ENCODE measurements at regions of chr9 and their contacts with region 1.

Region 1: GRCh38 chr9:89497978-89498851 is at the start of gene SEMA4D:
- DNase-seq: peak in 3 of 5 donors; percentile 28 to 68 (median 37)
- H3K4me3 ChIP-seq: peak within 1 kb of the TSS; percentile 89 to 98
- H3K4me3 Mint-ChIP-seq: peak within 1 kb of the TSS; percentile 94 to 100 (median 98)
- H3K27ac ChIP-seq: peak within 1 kb of the TSS; percentile 72
- H3K27ac Mint-ChIP-seq: peak within 1 kb of the TSS; percentile 94 to 98 (median 96)
- H3K4me1 ChIP-seq: peaks cover 86% of the 10 kb centered on the region
- H3K4me1 Mint-ChIP-seq: peaks cover 71 to 93% (median 81%) of the 10 kb centered on the region in 4 donors
- H3K27me3 ChIP-seq: no peaks in the 10 kb centered on the region
- H3K27me3 Mint-ChIP-seq: no peaks in the 10 kb centered on the region
- total RNA-seq, gene SEMA4D: 393 to 410 TPM

Region 2: DNA sequence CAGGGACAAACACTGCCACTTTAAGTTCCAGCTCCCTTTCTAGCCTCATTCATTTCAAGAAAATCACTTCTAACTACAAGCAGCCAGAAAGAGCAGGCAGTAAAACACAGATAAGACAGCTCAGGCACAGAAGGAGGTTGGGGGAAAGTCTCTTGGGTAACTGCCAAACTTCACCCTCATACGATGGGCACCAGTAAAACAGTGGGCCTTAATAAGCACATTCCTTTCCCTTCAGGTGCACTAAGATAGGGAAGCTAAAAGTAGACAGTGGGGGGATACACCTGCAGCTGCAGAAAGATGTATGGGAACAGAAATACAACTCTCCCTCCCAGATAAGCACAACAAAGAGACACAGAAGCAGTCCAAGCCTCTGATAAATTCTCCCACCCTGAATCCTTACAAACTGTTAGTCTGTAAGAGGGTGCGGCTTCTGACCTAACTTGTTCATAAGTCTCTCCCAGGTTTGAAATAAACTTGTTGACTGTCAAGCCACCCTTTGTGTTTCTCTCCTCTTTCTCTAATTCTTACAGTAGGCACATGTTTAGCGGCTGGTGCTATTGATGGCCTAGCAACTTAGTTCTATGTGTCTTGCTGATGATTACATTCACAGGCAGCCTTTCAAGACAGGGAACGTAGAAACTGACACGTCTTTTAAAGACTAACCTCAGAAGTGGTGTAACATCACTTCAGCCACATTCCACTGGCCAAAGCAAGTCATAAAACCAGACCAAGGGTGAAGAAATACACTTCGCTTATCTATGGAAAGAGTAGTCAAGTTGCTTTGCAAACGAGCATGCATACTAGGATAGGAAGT is 194.0 kb before region 1 on chr9:
- CTCF ChIA-PET with region 1: no interaction called
- POLR2A ChIA-PET with region 1: no interaction called
- intact Hi-C with region 1: no loop called
- DNase-seq: no peak
- H3K4me3 ChIP-seq: no peak overlapping the region
- H3K4me3 Mint-ChIP-seq: no peak overlapping the region
- H3K27ac ChIP-seq: no peak overlapping the region
- H3K27ac Mint-ChIP-seq: no peak overlapping the region
- H3K4me1 ChIP-seq: peaks cover under 1% of the 10 kb centered on the region
- H3K4me1 Mint-ChIP-seq: peaks cover 0 to 1% (median 0%) of the 10 kb centered on the region in 4 donors
- H3K27me3 ChIP-seq: no peaks in the 10 kb centered on the region
- H3K27me3 Mint-ChIP-seq: no peaks in the 10 kb centered on the region

Region 3: DNA sequence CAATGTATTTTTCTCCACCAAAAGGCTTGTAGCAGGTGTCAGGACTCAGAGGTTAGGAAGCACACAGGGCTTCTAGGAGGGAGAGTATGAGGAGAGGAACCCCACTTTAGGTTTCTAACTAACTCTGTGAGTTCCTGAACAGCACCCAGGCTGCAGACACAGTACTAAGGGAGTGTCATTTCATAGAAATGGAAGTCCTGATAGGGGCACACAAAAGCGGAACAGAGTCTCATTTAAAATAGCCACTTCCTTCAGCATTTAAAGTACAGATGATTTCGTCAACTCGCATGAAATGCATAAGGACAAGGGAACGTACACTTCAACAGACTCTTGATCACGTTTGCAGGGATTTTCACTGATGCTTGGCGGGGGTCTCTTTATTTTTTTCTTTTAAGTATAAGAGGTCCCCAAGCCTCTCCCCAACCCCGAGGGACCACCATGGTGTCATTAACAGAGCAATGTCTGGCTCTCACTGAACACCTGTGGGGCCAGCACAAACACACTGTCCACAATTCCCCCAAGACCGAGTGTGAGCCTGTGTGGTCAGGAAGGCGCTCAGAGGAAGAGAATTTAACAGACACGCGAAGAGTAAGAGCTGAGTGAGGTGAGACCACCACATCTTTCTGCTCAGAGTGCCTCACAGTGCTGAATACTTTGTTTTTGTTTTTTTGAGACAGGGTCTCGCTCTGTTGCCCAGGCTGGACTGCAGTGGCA is 97.7 kb before region 1 on chr9:
- CTCF ChIA-PET with region 1: no interaction called
- POLR2A ChIA-PET with region 1: no interaction called
- intact Hi-C with region 1: no loop called
- DNase-seq: no peak
- H3K4me3 ChIP-seq: no peak overlapping the region
- H3K4me3 Mint-ChIP-seq: peak overlapping the region in 2 of 8 donors; percentile 10 to 21
- H3K27ac ChIP-seq: no peak overlapping the region
- H3K27ac Mint-ChIP-seq: peak overlapping the region in 6 of 7 donors; percentile 39 to 85 (median 71)
- H3K4me1 ChIP-seq: peaks cover 3% of the 10 kb centered on the region
- H3K4me1 Mint-ChIP-seq: peaks cover 2 to 11% (median 6%) of the 10 kb centered on the region in 4 donors
- H3K27me3 ChIP-seq: no peaks in the 10 kb centered on the region
- H3K27me3 Mint-ChIP-seq: no peaks in the 10 kb centered on the region

Region 4: GRCh38 chr9:89442981-89443814 is 55.0 kb before region 1 on chr9:
- CTCF ChIA-PET with region 1: no interaction called
- POLR2A ChIA-PET with region 1: interaction called, 15 read pairs
- intact Hi-C with region 1: no loop called
- DNase-seq: no peak
- H3K4me3 ChIP-seq: no peak overlapping the region
- H3K4me3 Mint-ChIP-seq: peak overlapping the region in 2 of 8 donors; percentile 18 to 46
- H3K27ac ChIP-seq: peak overlapping the region; percentile 50
- H3K27ac Mint-ChIP-seq: peak overlapping the region; percentile 90 to 99 (median 99)
- H3K4me1 ChIP-seq: peaks cover 99% of the 10 kb centered on the region
- H3K4me1 Mint-ChIP-seq: peaks cover 68 to 94% (median 82%) of the 10 kb centered on the region in 4 donors
- H3K27me3 ChIP-seq: no peaks in the 10 kb centered on the region
- H3K27me3 Mint-ChIP-seq: no peaks in the 10 kb centered on the region

Region 5: DNA sequence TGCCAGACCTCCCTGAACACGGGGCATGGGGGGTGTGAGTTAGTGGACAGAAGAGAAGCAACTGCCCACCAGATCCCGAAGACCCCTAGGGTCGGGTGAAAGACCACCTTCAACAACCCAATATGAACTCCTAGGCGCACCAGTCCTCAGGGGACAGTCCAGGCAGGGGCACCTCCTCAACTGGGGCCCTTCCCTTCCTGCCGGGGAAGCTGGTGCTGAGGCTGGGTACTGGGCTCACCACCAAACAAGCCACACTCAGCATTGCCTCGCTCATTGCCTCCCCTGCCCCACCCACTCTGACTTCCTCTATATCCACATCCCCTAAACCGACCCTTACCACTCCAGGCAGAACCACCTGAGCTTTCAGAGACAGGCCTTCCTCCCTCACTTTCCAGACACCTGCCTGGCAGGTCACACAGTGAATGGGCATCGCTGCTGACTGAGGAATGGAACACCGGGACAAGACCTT is 42.8 kb before region 1 on chr9:
- CTCF ChIA-PET with region 1: interaction called, 3 read pairs
- POLR2A ChIA-PET with region 1: interaction called, 17 read pairs
- intact Hi-C with region 1: no loop called
- DNase-seq: peak; percentile 50 to 72 (median 63)
- H3K4me3 ChIP-seq: peak overlapping the region in 1 of 2 donors; percentile 22
- H3K4me3 Mint-ChIP-seq: peak overlapping the region; percentile 72 to 90 (median 82)
- H3K27ac ChIP-seq: peak overlapping the region; percentile 68
- H3K27ac Mint-ChIP-seq: peak overlapping the region; percentile 92 to 98 (median 97)
- H3K4me1 ChIP-seq: peaks cover 97% of the 10 kb centered on the region
- H3K4me1 Mint-ChIP-seq: peaks cover 71 to 98% (median 87%) of the 10 kb centered on the region in 4 donors
- H3K27me3 ChIP-seq: no peaks in the 10 kb centered on the region
- H3K27me3 Mint-ChIP-seq: no peaks in the 10 kb centered on the region

Region 6: GRCh38 chr9:89477811-89478630 is 20.2 kb before region 1 on chr9:
- CTCF ChIA-PET with region 1: interaction called, 3 read pairs
- POLR2A ChIA-PET with region 1: interaction called, 50 read pairs
- intact Hi-C with region 1: loop called (anchors 2 kb)
- DNase-seq: peak; percentile 50 to 80 (median 53)
- H3K4me3 ChIP-seq: peak overlapping the region; percentile 52 to 57
- H3K4me3 Mint-ChIP-seq: peak overlapping the region; percentile 77 to 91 (median 86)
- H3K27ac ChIP-seq: peak overlapping the region; percentile 75
- H3K27ac Mint-ChIP-seq: peak overlapping the region; percentile 85 to 97 (median 96)
- H3K4me1 ChIP-seq: peaks cover 88% of the 10 kb centered on the region
- H3K4me1 Mint-ChIP-seq: peaks cover 72 to 94% (median 85%) of the 10 kb centered on the region in 4 donors
- H3K27me3 ChIP-seq: no peaks in the 10 kb centered on the region
- H3K27me3 Mint-ChIP-seq: no peaks in the 10 kb centered on the region

Region 7: DNA sequence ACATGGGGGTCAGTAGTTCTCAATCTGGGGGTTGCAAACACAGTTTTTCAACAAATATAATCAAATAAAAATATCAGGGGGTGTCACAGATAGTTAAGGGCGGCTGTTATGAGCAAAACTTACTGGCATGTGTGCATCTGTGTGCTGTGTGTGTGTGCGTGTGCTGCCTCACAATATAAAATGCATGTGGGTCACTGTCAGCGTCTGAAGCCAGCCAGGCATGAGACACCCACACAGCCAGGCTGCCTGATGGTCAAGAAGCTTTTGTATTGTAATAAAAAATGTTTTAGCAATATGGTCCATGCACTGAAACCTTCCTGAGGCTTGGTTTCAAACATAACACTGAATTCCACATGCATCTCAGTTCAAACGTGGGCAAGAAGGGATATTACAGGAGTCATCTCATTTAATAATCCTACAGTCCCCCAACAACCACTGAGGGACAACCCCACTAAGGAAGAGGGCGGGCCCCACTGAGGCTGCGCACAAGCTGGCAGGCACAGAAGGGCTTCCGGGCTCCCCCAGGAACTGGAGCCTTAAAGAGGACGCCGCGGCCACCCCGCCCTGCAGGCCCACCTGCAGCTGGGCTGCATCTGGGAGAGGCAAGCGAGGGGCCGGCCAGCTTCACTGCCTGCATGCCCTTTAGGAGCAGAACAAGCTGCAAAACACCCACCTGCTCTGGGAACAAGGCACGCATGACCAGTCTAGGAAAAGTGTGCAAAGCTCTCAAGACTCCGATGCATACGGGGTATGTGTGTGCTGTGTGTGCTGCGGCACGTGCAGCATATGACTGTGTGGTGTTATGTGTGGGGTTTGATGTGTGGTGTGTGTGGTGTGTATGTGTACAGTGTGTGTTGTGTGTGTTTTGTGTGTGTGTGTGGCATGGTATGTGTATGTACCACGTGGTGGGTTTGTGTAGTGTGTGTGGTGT is 14.4 kb before region 1 on chr9:
- CTCF ChIA-PET with region 1: interaction called, 3 read pairs
- POLR2A ChIA-PET with region 1: interaction called, 50 read pairs
- intact Hi-C with region 1: loop called (anchors 2 kb)
- DNase-seq: peak; percentile 66 to 83 (median 72)
- H3K4me3 ChIP-seq: peak overlapping the region; percentile 50 to 79
- H3K4me3 Mint-ChIP-seq: peak overlapping the region; percentile 92 to 100 (median 98)
- H3K27ac ChIP-seq: peak overlapping the region; percentile 58
- H3K27ac Mint-ChIP-seq: peak overlapping the region; percentile 74 to 99 (median 96)
- H3K4me1 ChIP-seq: peaks cover 89% of the 10 kb centered on the region
- H3K4me1 Mint-ChIP-seq: peaks cover 78 to 95% (median 88%) of the 10 kb centered on the region in 4 donors
- H3K27me3 ChIP-seq: no peaks in the 10 kb centered on the region
- H3K27me3 Mint-ChIP-seq: no peaks in the 10 kb centered on the region

Region 8: GRCh38 chr9:89508951-89509615 is 10.9 kb after region 1 on chr9:
- CTCF ChIA-PET with region 1: interaction called, 9 read pairs
- POLR2A ChIA-PET with region 1: interaction called, 12 read pairs
- intact Hi-C with region 1: no loop called
- DNase-seq: no peak
- H3K4me3 ChIP-seq: no peak overlapping the region
- H3K4me3 Mint-ChIP-seq: peak overlapping the region in 2 of 8 donors; percentile 15 to 41
- H3K27ac ChIP-seq: no peak overlapping the region
- H3K27ac Mint-ChIP-seq: peak overlapping the region in 4 of 7 donors; percentile 11 to 72 (median 25)
- H3K4me1 ChIP-seq: peaks cover 47% of the 10 kb centered on the region
- H3K4me1 Mint-ChIP-seq: peaks cover 45 to 88% (median 66%) of the 10 kb centered on the region in 4 donors
- H3K27me3 ChIP-seq: no peaks in the 10 kb centered on the region
- H3K27me3 Mint-ChIP-seq: no peaks in the 10 kb centered on the region

Region 9: DNA sequence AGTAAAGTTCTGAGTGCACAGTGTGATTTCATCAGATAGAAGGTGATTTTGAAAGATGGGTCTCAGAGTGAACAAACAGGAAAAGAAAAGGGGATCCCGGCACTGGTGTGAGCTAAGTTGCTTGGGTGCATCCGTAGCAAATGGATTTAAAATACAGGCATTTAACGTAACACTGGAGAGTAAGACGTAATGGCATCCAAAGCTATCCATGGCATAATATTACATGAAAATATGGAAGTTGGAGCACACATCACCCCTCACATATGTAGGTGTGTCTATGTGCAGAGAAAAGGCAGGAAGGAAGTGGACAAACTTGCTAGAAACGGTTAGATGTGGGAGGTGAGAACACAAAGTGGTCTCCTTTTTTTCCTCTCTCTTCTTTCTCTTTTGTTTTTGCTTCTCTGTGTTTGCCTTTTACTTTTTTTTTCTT is 37.9 kb after region 1 on chr9:
- CTCF ChIA-PET with region 1: interaction called, 3 read pairs
- POLR2A ChIA-PET with region 1: interaction called, 13 read pairs
- intact Hi-C with region 1: loop called (anchors 1 kb)
- DNase-seq: peak; percentile 54 to 76 (median 71)
- H3K4me3 ChIP-seq: peak overlapping the region in 1 of 2 donors; percentile 34
- H3K4me3 Mint-ChIP-seq: peak overlapping the region; percentile 72 to 84 (median 80)
- H3K27ac ChIP-seq: peak overlapping the region; percentile 23
- H3K27ac Mint-ChIP-seq: peak overlapping the region; percentile 58 to 93 (median 89)
- H3K4me1 ChIP-seq: peaks cover 89% of the 10 kb centered on the region
- H3K4me1 Mint-ChIP-seq: peaks cover 62 to 93% (median 84%) of the 10 kb centered on the region in 4 donors
- H3K27me3 ChIP-seq: no peaks in the 10 kb centered on the region
- H3K27me3 Mint-ChIP-seq: no peaks in the 10 kb centered on the region

Region 10: GRCh38 chr9:89597711-89598625 is 99.8 kb after region 1 on chr9:
- CTCF ChIA-PET with region 1: no interaction called
- POLR2A ChIA-PET with region 1: no interaction called
- intact Hi-C with region 1: no loop called
- DNase-seq: peak; percentile 50 to 58 (median 52)
- H3K4me3 ChIP-seq: no peak overlapping the region
- H3K4me3 Mint-ChIP-seq: no peak overlapping the region
- H3K27ac ChIP-seq: no peak overlapping the region
- H3K27ac Mint-ChIP-seq: no peak overlapping the region
- H3K4me1 ChIP-seq: no peaks in the 10 kb centered on the region
- H3K4me1 Mint-ChIP-seq: peaks cover 0 to 2% (median under 1%) of the 10 kb centered on the region in 4 donors
- H3K27me3 ChIP-seq: no peaks in the 10 kb centered on the region
- H3K27me3 Mint-ChIP-seq: peaks cover 2 to 6% of the 10 kb centered on the region in 2 donors

Measured in CD4-positive, alpha-beta memory T cell (primary cell).